ENCODE measurements at regions of chr17 and their contacts with region 1.

Region 1: DNA sequence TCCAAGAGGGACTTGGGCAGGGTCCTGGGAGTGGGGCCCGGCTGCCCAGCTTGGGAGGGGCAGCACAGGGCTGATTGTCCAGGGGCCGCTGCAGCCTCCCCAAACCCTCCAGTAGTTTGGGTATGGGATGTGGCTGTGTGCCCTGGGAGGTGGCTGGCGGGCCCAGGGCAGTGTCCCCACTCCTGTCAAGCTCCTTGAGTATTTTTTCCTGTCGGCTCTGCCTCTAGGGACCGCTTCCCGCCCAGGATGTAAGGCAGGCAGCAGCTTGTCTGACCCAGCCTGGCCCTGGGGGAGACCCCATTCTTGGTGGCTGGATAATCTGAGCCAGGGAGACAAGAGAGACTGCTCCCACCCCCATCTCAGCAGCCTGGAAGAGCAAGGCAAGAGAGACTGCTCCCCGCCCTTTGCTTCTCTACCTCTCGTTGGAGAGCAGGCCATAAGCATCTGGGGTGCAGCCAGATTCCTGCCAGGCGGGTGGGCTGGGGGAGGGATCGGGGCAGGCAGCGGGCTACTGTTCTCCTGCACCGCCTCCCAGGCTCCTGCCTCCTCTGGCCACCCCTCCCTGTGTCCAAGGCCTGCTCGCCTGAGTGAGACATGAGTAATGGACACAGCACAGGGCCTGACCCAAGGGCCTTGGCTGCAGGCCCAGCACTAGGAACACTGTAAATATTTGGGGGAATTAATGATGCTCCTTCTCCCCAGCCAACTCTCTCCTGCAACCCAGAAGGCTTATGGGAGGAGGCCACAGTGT is 18.4 kb upstream of the ITGA3 start:
- DNase-seq: peak in 2 of 5 donors; percentile 40 to 54
- ATAC-seq: peak; percentile 60 to 81 (median 70)
- H3K4me3 ChIP-seq: no peak overlapping the region
- H3K27ac ChIP-seq: peak overlapping the region in 1 of 12 donors; percentile 84
- H3K4me1 ChIP-seq: peaks cover 0 to 12% (median 0%) of the 10 kb centered on the region in 12 donors
- H3K27me3 ChIP-seq: no peaks in the 10 kb centered on the region
- CTCF ChIP-seq: no peak
- POLR2A ChIP-seq: no peak

Region 2: DNA sequence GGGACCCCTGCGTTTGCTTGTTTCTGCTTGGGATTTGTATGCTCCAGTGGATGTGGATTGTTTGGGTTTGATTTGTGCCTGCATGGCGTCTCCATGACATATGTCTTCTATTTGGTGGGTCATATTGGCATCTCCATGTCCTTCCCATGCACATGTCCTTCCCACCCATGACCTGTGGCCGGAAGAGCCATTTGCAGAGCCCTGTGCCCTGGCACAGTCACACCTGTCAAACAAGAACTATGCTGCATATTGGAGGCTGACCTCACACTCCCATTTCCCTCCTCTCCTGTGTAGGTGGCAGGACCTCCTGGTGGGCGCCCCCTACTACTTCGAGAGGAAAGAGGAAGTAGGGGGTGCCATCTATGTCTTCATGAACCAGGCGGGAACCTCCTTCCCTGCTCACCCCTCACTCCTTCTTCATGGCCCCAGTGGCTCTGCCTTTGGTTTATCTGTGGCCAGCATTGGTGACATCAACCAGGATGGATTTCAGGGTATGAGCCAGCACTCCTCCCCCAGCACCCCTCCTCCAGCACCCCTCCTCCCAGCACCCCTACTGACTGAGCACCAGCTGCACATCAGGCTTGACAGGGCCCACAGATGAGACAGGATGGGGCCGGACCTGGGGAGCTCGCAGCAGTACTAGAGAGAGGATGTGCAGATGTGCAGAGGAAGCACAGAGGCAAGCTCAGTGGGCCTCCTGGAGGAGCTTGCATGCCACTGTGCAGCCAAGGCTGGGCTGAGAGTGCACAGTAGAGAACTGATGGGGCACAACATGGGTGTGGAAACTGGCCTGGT is 34.4 kb after region 1 on chr17:
- intact Hi-C with region 1: loop called in 1 of 10 experiments (anchors 5 kb)
- DNase-seq: peak in 2 of 5 donors; percentile 0 to 53
- ATAC-seq: no peak
- H3K4me3 ChIP-seq: no peak overlapping the region
- H3K27ac ChIP-seq: no peak overlapping the region
- H3K4me1 ChIP-seq: peaks cover 0 to 10% (median 0%) of the 10 kb centered on the region in 12 donors
- H3K27me3 ChIP-seq: no peaks in the 10 kb centered on the region
- CTCF ChIP-seq: no peak
- POLR2A ChIP-seq: no peak

Region 3: GRCh38 chr17:50213026-50214022 is 175.8 kb after region 1 on chr17:
- intact Hi-C with region 1: no loop called
- DNase-seq: no peak
- ATAC-seq: no peak
- H3K4me3 ChIP-seq: no peak overlapping the region
- H3K27ac ChIP-seq: peak overlapping the region in 1 of 12 donors; percentile 90
- H3K4me1 ChIP-seq: peaks cover 0 to 52% (median 29%) of the 10 kb centered on the region in 12 donors
- H3K27me3 ChIP-seq: peaks cover 0 to 11% (median 0%) of the 10 kb centered on the region in 9 donors
- CTCF ChIP-seq: no peak
- POLR2A ChIP-seq: no peak

Region 4: GRCh38 chr17:50297407-50297865 is 259.9 kb after region 1 on chr17:
- intact Hi-C with region 1: loop called in 1 of 10 experiments (anchors 10 kb)
- DNase-seq: peak; percentile 67 to 87 (median 74)
- ATAC-seq: peak; percentile 87 to 93 (median 92)
- H3K4me3 ChIP-seq: no peak overlapping the region
- H3K27ac ChIP-seq: no peak overlapping the region
- H3K4me1 ChIP-seq: no peaks in the 10 kb centered on the region
- H3K27me3 ChIP-seq: peaks cover 0 to 3% (median 0%) of the 10 kb centered on the region in 9 donors
- CTCF ChIP-seq: peak; percentile 86 to 97 (median 94)
- POLR2A ChIP-seq: no peak